CD4-positive, alpha-beta T cell (primary cell): ENCODE measurements at regions of chr10 and their contacts with region 1.

Region 1: DNA sequence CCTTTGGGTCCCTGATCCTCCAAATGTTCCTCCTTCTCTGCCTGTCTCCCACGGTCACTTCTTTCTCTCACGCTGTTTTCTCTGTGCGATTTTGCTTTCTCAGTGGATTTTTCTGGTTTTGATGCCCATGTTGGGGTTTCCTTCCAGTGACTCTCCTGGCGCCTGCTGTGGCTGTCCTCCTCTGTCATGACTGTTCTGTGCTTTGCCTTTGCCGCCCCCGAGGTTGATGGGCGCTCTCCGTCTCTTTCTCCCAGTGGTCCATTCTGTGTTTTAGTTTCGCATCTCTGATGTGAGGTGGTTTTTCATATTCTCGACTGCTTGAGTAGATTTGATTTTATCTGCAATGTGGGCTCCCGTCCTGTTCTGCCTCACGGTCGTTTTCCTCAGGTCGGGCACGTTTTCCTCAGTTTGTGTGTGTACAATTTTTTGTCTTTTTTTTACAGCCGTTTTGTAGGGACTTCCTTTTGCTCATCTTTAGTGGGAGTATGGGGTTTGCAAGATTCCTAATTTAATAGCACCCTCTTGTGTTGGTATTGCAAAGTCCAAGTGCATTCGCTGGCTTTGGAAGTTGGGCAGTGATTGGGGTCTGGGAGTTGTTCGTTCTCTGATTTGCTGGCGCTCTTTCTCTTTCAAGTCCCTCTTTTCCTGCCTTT is 100.0 kb downstream of the INPP5A start:
- DNase-seq: peak in 5 of 14 experiments; percentile 25 to 73 (median 66)
- ATAC-seq: peak; percentile 79
- H3K4me3 ChIP-seq: no peak overlapping the region
- H3K4me3 Mint-ChIP-seq: no peak overlapping the region
- H3K27ac ChIP-seq: no peak overlapping the region
- H3K27ac Mint-ChIP-seq: no peak overlapping the region
- H3K4me1 ChIP-seq: peaks cover 11% of the 10 kb centered on the region
- H3K4me1 Mint-ChIP-seq: peaks cover 30% of the 10 kb centered on the region
- H3K27me3 ChIP-seq: no peaks in the 10 kb centered on the region
- H3K27me3 Mint-ChIP-seq: no peaks in the 10 kb centered on the region
- CTCF ChIP-seq: peak; percentile 82

Region 2: GRCh38 chr10:132223156-132223590 is 414.4 kb before region 1 on chr10:
- CTCF ChIA-PET with region 1: no interaction called
- POLR2A ChIA-PET with region 1: no interaction called
- intact Hi-C with region 1: loop called in 1 of 2 experiments (anchors 5 kb)
- DNase-seq: peak; percentile 44 to 81 (median 58)
- ATAC-seq: peak; percentile 96
- H3K4me3 ChIP-seq: no peak overlapping the region
- H3K4me3 Mint-ChIP-seq: no peak overlapping the region
- H3K27ac ChIP-seq: no peak overlapping the region
- H3K27ac Mint-ChIP-seq: no peak overlapping the region
- H3K4me1 ChIP-seq: peaks cover 10% of the 10 kb centered on the region
- H3K4me1 Mint-ChIP-seq: peaks cover 4% of the 10 kb centered on the region
- H3K27me3 ChIP-seq: no peaks in the 10 kb centered on the region
- H3K27me3 Mint-ChIP-seq: no peaks in the 10 kb centered on the region
- CTCF ChIP-seq: peak; percentile 69

Region 3: DNA sequence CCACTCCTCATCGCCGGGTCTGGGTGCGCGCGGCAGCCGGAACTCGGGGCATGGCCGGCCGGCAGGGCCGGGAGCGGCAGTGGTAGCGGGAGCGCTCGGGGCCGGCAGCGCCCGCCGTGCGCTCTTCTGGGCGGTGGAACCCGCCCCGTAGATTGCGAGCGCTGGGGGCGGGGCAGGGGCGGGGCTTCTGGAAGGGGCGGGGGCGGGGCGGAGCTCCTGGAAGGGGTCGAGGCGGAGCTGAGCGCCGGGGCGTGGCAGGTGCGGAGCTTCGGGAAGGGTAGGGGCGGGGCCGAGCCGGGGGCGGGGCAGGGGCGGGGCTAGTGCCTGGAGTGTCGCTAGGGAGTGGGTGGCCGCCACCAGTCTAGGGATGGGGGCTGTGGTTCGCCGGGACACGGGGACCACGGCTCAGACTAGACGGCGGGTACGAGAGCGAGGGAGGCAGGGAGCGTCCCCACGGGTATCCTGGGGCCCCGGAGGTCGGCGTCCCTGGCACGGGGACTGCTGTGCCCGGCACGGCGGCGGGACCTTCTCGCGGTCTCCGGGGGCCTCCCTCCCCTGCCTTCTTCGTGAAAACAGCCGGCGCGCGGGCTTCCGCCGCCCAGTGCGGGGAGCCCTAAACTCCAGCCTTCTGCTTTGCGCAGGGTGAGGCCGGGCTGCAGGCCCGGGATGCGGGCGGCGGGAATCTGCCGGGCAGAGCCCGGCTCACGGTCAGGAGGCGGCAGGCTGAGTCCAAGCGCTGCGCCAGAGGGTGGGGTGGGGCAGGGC is 329.6 kb before region 1 on chr10 and contains the start of gene STK32C:
- CTCF ChIA-PET with region 1: no interaction called
- POLR2A ChIA-PET with region 1: no interaction called
- intact Hi-C with region 1: no loop called
- DNase-seq: peak; percentile 86 to 99 (median 90)
- ATAC-seq: peak; percentile 85
- H3K4me3 ChIP-seq: peak within 1 kb of the TSS; percentile 69
- H3K4me3 Mint-ChIP-seq: peak within 1 kb of the TSS; percentile 93
- H3K27ac ChIP-seq: no peak within 1 kb of the TSS
- H3K27ac Mint-ChIP-seq: peak within 1 kb of the TSS; percentile 61
- H3K4me1 ChIP-seq: peaks cover 16% of the 10 kb centered on the region
- H3K4me1 Mint-ChIP-seq: peaks cover 13% of the 10 kb centered on the region
- H3K27me3 ChIP-seq: no peaks in the 10 kb centered on the region
- H3K27me3 Mint-ChIP-seq: no peaks in the 10 kb centered on the region
- CTCF ChIP-seq: no peak
- total RNA-seq, gene STK32C: 4.9 to 5.2 TPM

Region 4: GRCh38 chr10:132387764-132388210 is 249.8 kb before region 1 on chr10:
- CTCF ChIA-PET with region 1: interaction called, 3 read pairs
- POLR2A ChIA-PET with region 1: no interaction called
- intact Hi-C with region 1: loop called (anchors 1 to 5 kb)
- DNase-seq: peak; percentile 68 to 89 (median 77)
- ATAC-seq: peak; percentile 96
- H3K4me3 ChIP-seq: peak overlapping the region; percentile 22
- H3K4me3 Mint-ChIP-seq: peak overlapping the region; percentile 25
- H3K27ac ChIP-seq: no peak overlapping the region
- H3K27ac Mint-ChIP-seq: peak overlapping the region; percentile 71
- H3K4me1 ChIP-seq: peaks cover 20% of the 10 kb centered on the region
- H3K4me1 Mint-ChIP-seq: no peaks in the 10 kb centered on the region
- H3K27me3 ChIP-seq: no peaks in the 10 kb centered on the region
- H3K27me3 Mint-ChIP-seq: no peaks in the 10 kb centered on the region
- CTCF ChIP-seq: peak; percentile 44

Region 5: GRCh38 chr10:132458593-132459300 is 178.9 kb before region 1 on chr10:
- CTCF ChIA-PET with region 1: interaction called, 5 read pairs
- POLR2A ChIA-PET with region 1: no interaction called
- intact Hi-C with region 1: loop called (anchors 1 kb)
- DNase-seq: peak; percentile 43 to 83 (median 64)
- ATAC-seq: peak; percentile 94
- H3K4me3 ChIP-seq: no peak overlapping the region
- H3K4me3 Mint-ChIP-seq: no peak overlapping the region
- H3K27ac ChIP-seq: no peak overlapping the region
- H3K27ac Mint-ChIP-seq: no peak overlapping the region
- H3K4me1 ChIP-seq: peaks cover 8% of the 10 kb centered on the region
- H3K4me1 Mint-ChIP-seq: no peaks in the 10 kb centered on the region
- H3K27me3 ChIP-seq: no peaks in the 10 kb centered on the region
- H3K27me3 Mint-ChIP-seq: no peaks in the 10 kb centered on the region
- CTCF ChIP-seq: peak; percentile 88